Ovary (tissue), 10 donors: ENCODE measurements at regions of chr16 and their contacts with region 1.

Region 1: GRCh38 chr16:21708533-21709115 is 44.9 kb downstream of the OTOA start:
- DNase-seq: peak; percentile 24 to 71 (median 58)
- H3K4me3 ChIP-seq: no peak overlapping the region
- H3K27ac ChIP-seq: no peak overlapping the region
- H3K4me1 ChIP-seq: no peaks in the 10 kb centered on the region
- H3K27me3 ChIP-seq: no peaks in the 10 kb centered on the region
- CTCF ChIP-seq: peak in 2 of 3 donors; percentile 28 to 44
- EP300 ChIP-seq: no peak
- POLR2A ChIP-seq: no peak

Region 2: DNA sequence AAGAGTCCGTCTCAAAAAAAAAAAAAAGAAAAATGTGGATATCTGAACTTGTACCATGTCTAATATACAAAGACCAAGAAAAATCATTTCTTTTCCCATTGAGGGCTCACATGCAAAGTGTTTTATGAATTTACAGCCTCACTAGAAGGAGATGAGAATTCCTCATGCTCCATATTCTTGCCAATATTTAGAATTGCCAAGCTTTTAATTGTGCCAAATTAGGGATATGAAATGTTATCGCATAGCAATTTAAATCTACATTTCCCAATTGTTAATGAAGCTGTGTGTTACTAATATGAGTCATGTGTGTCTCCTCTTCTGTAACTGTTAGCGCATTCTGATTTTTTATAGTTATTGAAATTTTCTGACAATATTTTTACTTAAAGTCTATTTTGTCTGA is 367.5 kb before region 1 on chr16:
- intact Hi-C with region 1: no loop called
- DNase-seq: no peak
- H3K4me3 ChIP-seq: no peak overlapping the region
- H3K27ac ChIP-seq: no peak overlapping the region
- H3K4me1 ChIP-seq: no peaks in the 10 kb centered on the region
- H3K27me3 ChIP-seq: no peaks in the 10 kb centered on the region
- CTCF ChIP-seq: no peak
- EP300 ChIP-seq: no peak
- POLR2A ChIP-seq: no peak

Region 3: DNA sequence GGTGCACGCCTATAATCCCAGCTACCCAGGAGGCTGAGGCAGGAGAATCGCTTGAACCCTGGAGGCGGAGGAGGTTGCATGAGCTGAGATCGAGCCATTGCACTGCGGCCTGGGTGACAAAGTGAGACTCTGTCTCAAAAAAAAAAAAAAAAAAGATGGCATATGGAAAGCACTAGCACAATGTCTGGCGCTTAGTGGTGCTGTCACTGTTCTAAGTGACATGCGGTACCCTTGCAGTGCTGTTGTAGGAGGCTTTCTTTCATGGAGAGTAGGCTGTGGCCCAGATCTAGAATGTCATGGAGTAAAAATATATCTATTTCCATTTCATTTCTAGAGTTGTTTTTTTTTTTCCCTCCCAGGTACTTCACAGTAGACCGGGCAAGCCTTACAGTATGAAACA is 123.8 kb before region 1 on chr16:
- intact Hi-C with region 1: loop called in 2 of 4 experiments (anchors 5 to 10 kb)
- DNase-seq: no peak
- H3K4me3 ChIP-seq: no peak overlapping the region
- H3K27ac ChIP-seq: no peak overlapping the region
- H3K4me1 ChIP-seq: no peaks in the 10 kb centered on the region
- H3K27me3 ChIP-seq: no peaks in the 10 kb centered on the region
- CTCF ChIP-seq: no peak
- EP300 ChIP-seq: no peak
- POLR2A ChIP-seq: no peak

Region 4: GRCh38 chr16:21599233-21600030 is 109.2 kb before region 1 on chr16 and contains the start of gene METTL9:
- intact Hi-C with region 1: no loop called
- DNase-seq: peak; percentile 90 to 96 (median 94)
- H3K4me3 ChIP-seq: peak within 1 kb of the TSS; percentile 81
- H3K27ac ChIP-seq: peak within 1 kb of the TSS; percentile 82 to 91
- H3K4me1 ChIP-seq: peaks cover 5% of the 10 kb centered on the region
- H3K27me3 ChIP-seq: no peaks in the 10 kb centered on the region
- CTCF ChIP-seq: peak in 1 of 3 donors; percentile 29
- EP300 ChIP-seq: no peak
- POLR2A ChIP-seq: peak; percentile 56
- total RNA-seq, gene METTL9: 69.3 to 160 (median 87.0) TPM

Region 5: GRCh38 chr16:21656795-21657768 is 51.5 kb before region 1 on chr16:
- intact Hi-C with region 1: loop called in 1 of 4 experiments (anchors 10 kb)
- DNase-seq: peak in 1 of 5 donors; percentile 27
- H3K4me3 ChIP-seq: no peak overlapping the region
- H3K27ac ChIP-seq: no peak overlapping the region
- H3K4me1 ChIP-seq: no peaks in the 10 kb centered on the region
- H3K27me3 ChIP-seq: no peaks in the 10 kb centered on the region
- CTCF ChIP-seq: peak in 1 of 3 donors; percentile 59
- EP300 ChIP-seq: no peak
- POLR2A ChIP-seq: no peak

Region 6: DNA sequence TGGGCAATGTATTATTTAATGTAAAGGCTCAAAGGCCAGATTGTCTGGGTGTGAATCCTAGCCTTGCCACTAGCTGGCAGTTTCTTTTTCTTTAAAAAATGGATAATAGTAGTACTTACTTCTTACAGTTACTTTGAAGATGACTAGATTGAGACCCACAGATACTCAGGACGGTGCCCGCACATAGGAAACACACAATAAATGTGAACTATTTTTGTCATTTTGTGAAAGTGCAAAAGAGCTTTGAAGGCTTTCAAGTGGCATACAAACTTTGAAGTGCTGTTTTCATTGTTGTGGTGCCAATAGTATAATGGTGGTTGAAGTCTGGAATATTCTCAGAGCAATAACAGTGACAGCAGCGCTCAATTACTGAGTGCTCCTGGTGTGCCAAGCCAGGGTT is 18.7 kb after region 1 on chr16:
- intact Hi-C with region 1: no loop called
- DNase-seq: no peak
- H3K4me3 ChIP-seq: no peak overlapping the region
- H3K27ac ChIP-seq: no peak overlapping the region
- H3K4me1 ChIP-seq: no peaks in the 10 kb centered on the region
- H3K27me3 ChIP-seq: no peaks in the 10 kb centered on the region
- CTCF ChIP-seq: no peak
- EP300 ChIP-seq: no peak
- POLR2A ChIP-seq: no peak

Region 7: GRCh38 chr16:23101012-23101550 is 1392.5 kb after region 1 on chr16:
- intact Hi-C with region 1: no loop called
- DNase-seq: no peak
- H3K4me3 ChIP-seq: no peak overlapping the region
- H3K27ac ChIP-seq: no peak overlapping the region
- H3K4me1 ChIP-seq: no peaks in the 10 kb centered on the region
- H3K27me3 ChIP-seq: no peaks in the 10 kb centered on the region
- CTCF ChIP-seq: no peak
- EP300 ChIP-seq: no peak
- POLR2A ChIP-seq: no peak